ENCODE measurements at regions of chr17 and their contacts with region 1.

Region 1: GRCh38 chr17:35460354-35460851 is 11.8 kb upstream of the SLFN13 start:
- DNase-seq: peak; percentile 62
- ATAC-seq: peak; percentile 94
- H3K4me3 Mint-ChIP-seq: peak overlapping the region; percentile 80
- H3K27ac Mint-ChIP-seq: peak overlapping the region; percentile 67
- H3K4me1 Mint-ChIP-seq: peaks cover 19% of the 10 kb centered on the region
- H3K27me3 Mint-ChIP-seq: peaks cover 3% of the 10 kb centered on the region
- CTCF ChIP-seq: no peak

Region 2: GRCh38 chr17:35368081-35368830 is 92.1 kb before region 1 on chr17:
- CTCF ChIA-PET with region 1: no interaction called
- POLR2A ChIA-PET with region 1: no interaction called
- intact Hi-C with region 1: loop called (anchors 1 kb)
- DNase-seq: no peak
- ATAC-seq: peak; percentile 100
- H3K4me3 Mint-ChIP-seq: peak overlapping the region; percentile 39
- H3K27ac Mint-ChIP-seq: peak overlapping the region; percentile 78
- H3K4me1 Mint-ChIP-seq: peaks cover 60% of the 10 kb centered on the region
- H3K27me3 Mint-ChIP-seq: no peaks in the 10 kb centered on the region
- CTCF ChIP-seq: no peak

Region 3: GRCh38 chr17:35476283-35476820 is 15.9 kb after region 1 on chr17:
- CTCF ChIA-PET with region 1: no interaction called
- POLR2A ChIA-PET with region 1: no interaction called
- intact Hi-C with region 1: no loop called
- DNase-seq: no peak
- ATAC-seq: no peak
- H3K4me3 Mint-ChIP-seq: no peak overlapping the region
- H3K27ac Mint-ChIP-seq: no peak overlapping the region
- H3K4me1 Mint-ChIP-seq: no peaks in the 10 kb centered on the region
- H3K27me3 Mint-ChIP-seq: peaks cover 2% of the 10 kb centered on the region
- CTCF ChIP-seq: no peak